Psoas muscle (tissue), 8 donors: ENCODE measurements at regions of chr5 and their contacts with region 1.

Region 1: GRCh38 chr5:173835131-173835530 is 53.0 kb upstream of the CPEB4 start:
- DNase-seq: no peak
- ATAC-seq: peak in 3 of 4 donors; percentile 9 to 32 (median 17)
- H3K4me3 ChIP-seq: no peak overlapping the region
- H3K27ac ChIP-seq: peak overlapping the region; percentile 62
- H3K4me1 ChIP-seq: peaks cover 32% of the 10 kb centered on the region
- H3K27me3 ChIP-seq: no peaks in the 10 kb centered on the region
- CTCF ChIP-seq: no peak

Region 2: DNA sequence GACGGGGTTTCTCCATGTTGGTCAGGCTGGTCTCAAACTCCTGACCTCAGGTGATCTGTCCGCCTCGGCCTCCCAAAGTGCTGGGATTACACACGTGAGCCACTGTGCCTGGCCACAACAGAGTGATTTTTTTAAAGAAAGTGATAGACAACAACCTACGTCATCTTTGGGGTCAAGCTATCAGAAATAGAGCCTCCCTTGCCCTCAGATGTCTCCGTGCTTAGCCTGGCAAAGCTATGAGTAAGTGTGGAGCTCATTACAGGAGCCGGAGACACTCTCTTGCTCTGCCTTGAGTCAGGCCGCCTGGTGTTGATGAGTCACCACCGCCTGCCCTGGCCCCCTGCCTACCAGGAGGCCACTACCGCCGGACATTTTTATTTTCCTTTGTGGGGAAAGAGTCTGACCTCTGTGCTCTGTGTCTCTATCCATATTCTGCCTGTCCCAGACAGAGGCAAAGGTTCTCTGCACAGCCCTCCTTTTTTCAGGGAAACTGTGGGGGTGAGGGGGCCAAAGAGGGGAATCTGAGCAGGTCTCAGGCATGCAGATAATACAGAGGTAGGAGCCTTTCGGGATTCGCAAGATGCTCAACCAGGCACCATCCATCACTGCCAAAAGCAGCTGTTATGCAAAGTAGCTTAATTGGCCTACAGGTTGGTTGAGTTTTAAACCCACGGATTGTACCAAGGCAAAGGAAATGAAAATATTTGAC is 70.7 kb before region 1 on chr5:
- intact Hi-C with region 1: loop called in 1 of 2 experiments (anchors 5 kb)
- DNase-seq: peak; percentile 88 to 95
- ATAC-seq: peak; percentile 74 to 81 (median 79)
- H3K4me3 ChIP-seq: no peak overlapping the region
- H3K27ac ChIP-seq: peak overlapping the region; percentile 86
- H3K4me1 ChIP-seq: peaks cover 45% of the 10 kb centered on the region
- H3K27me3 ChIP-seq: no peaks in the 10 kb centered on the region
- CTCF ChIP-seq: no peak

Region 3: DNA sequence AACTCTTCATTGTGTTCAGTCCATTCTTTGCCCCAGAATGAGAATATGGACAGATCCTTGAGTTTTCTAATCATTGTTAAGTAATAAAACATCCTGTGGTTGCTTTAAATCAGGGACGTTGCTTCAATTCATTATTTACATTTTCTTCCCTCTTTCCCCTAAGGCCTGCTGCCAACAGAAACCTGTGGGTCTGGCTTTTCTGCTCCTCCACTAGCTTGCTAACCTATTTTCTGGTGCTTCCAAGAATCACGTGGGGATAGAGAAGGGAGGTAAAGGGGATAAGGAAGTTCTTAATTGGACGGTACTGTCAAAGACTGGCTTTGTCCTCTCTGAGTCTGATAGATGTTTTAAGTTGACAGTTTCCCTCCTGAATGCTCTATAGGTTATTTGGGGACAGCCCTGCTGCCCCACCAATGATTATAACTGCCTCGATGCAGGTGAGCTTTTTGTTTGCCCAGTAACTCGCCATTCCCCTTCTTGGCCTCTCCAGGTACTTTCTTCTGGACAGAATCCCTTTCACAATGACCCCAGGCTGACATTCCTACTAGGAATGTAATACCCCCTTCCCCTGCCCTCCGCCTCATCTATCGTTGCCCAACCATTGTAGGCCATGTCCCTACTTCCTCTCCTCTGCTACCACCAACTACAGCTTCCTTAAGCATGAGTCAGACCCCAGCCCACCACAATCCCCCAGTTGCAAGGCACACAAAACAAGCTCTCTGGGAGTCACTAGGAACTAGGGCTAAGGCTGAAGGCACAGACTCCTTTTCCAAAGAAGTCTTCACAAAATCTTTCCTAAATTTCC is 33.1 kb after region 1 on chr5:
- intact Hi-C with region 1: no loop called
- DNase-seq: no peak
- ATAC-seq: no peak
- H3K4me3 ChIP-seq: no peak overlapping the region
- H3K27ac ChIP-seq: no peak overlapping the region
- H3K4me1 ChIP-seq: no peaks in the 10 kb centered on the region
- H3K27me3 ChIP-seq: no peaks in the 10 kb centered on the region
- CTCF ChIP-seq: no peak